PC-3 (cell line): ENCODE measurements at regions of chr10 and their contacts with region 1.

Region 1: DNA sequence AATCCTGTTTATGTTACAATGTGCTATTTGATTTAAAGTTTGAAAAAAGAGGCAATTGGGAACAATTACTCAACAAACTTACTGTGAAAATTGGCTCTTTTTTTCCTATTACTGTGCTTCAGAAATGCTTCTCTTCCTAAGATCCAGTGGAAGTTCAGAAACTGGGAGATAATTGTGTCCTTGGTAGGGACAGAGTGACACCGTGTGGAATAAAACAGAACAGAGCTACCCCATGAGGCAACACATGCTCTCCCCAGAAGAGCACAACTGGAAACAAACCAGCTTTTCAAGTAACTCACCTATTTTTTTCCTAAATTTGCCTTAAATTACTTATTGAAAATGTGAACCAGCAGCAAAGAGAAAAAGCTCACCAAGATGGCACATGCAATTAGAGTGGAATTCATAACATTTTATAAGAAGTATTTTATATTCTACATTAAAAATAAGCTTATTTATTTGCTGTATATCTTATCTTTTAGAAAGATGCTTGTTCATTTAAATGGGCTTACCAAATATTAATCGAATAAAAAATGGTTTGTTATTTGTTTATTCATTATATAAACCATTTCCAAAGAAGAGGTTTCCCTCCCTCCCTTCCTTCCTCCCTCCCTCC is 346.1 kb upstream of the ANKRD30A start:
- DNase-seq: peak; percentile 100
- ATAC-seq: peak; percentile 98
- H3K4me3 ChIP-seq: no peak overlapping the region
- H3K27ac ChIP-seq: peak overlapping the region; percentile 13
- H3K4me1 ChIP-seq: peaks cover 25% of the 10 kb centered on the region
- H3K27me3 ChIP-seq: no peaks in the 10 kb centered on the region
- CTCF ChIP-seq: peak; percentile 100

Region 2: DNA sequence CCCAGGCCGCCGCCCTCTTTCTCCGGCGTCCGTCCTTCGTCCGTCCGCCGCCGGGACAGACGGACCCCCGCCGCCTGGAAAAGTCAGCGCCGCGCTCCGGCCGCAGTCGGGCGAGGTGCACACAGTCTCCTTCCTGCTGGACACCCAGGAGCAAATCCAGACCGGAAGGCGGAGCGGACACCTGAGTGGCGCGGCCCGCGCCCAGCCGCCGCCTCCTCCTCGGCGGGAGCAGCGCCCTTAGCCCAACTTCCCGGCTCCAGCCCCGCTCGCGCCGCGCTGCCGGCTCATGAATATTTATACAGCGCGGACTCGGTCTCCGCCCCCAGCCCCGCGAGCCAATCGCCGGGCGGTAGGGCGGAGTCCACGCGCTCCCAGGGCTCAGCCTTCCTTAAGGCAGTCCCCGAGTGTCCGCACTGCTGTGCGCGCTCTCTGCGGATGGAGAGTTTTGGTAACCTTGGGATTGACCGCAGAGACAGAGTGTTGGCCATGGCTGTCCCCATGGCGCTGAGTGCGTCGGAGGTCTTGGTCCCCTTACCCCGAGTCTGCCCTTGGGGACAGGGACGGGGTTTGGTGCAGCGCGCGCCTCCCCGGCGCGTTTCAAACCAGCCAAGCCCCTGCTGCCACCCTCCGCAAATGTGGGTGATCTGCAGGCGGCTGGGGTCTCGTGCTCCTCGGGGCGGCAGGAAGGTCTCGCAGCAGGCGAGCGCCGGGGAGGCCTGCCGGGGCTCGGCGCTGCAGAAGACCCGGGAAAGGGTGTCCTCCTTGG is 1137.1 kb before region 1 on chr10 and contains the start of gene FZD8:
- CTCF ChIA-PET with region 1: interaction called, 85 read pairs
- POLR2A ChIA-PET with region 1: no interaction called
- intact Hi-C with region 1: loop called (anchors 1 kb)
- DNase-seq: peak; percentile 100
- ATAC-seq: peak; percentile 73
- H3K4me3 ChIP-seq: peak within 1 kb of the TSS; percentile 80
- H3K27ac ChIP-seq: peak within 1 kb of the TSS; percentile 62
- H3K4me1 ChIP-seq: peaks cover 30% of the 10 kb centered on the region
- H3K27me3 ChIP-seq: no peaks in the 10 kb centered on the region
- CTCF ChIP-seq: peak; percentile 60; the same call in 1 of the 2 replicates
- total RNA-seq, gene FZD8: 275 and 375 TPM in 2 replicates

Region 3: DNA sequence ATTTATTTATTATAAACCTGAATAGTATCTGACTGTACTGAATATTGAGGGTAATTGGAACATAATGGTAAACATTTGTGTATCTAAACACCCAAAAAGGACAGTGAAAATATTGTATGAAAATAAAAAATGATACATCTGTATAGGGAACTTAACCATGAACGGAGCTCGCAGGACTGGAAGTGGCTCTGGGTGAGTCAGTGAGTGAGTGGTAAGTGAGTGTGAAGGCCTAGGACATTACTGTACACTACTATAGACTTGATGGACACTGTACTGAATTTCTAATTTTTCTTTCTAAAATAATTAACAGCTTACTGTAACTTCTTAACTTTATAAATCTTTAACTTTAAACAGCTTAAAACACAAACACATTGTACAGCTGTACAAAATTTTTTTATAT is 682.8 kb before region 1 on chr10:
- CTCF ChIA-PET with region 1: interaction called, 5 read pairs
- POLR2A ChIA-PET with region 1: no interaction called
- intact Hi-C with region 1: loop called (anchors 5 kb)
- DNase-seq: peak; percentile 97
- ATAC-seq: peak; percentile 71
- H3K4me3 ChIP-seq: no peak overlapping the region
- H3K27ac ChIP-seq: peak overlapping the region; percentile 58
- H3K4me1 ChIP-seq: peaks cover 29% of the 10 kb centered on the region
- H3K27me3 ChIP-seq: no peaks in the 10 kb centered on the region
- CTCF ChIP-seq: no peak

Region 4: DNA sequence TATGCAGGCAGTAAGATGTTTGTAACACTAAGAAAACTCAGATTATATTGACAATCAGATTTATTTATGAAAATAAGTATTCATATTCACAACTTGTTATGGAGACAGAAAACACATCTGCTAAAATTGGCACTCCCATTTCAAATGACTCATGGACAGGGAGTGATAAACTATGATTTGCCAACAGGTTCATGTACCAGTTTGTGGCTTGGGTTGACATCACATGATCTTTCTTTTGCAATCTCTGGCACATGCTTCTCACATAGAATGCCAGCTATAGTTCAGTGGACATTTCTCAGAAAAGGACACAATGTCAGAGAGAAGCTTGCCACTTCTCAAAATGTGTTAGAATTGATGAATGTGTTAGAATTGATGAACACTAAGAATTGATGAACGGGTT is 317.1 kb before region 1 on chr10:
- CTCF ChIA-PET with region 1: no interaction called
- POLR2A ChIA-PET with region 1: no interaction called
- intact Hi-C with region 1: loop called (anchors 1 kb)
- DNase-seq: peak; percentile 95
- ATAC-seq: no peak
- H3K4me3 ChIP-seq: no peak overlapping the region
- H3K27ac ChIP-seq: no peak overlapping the region
- H3K4me1 ChIP-seq: peaks cover 40% of the 10 kb centered on the region
- H3K27me3 ChIP-seq: no peaks in the 10 kb centered on the region
- CTCF ChIP-seq: no peak

Region 5: DNA sequence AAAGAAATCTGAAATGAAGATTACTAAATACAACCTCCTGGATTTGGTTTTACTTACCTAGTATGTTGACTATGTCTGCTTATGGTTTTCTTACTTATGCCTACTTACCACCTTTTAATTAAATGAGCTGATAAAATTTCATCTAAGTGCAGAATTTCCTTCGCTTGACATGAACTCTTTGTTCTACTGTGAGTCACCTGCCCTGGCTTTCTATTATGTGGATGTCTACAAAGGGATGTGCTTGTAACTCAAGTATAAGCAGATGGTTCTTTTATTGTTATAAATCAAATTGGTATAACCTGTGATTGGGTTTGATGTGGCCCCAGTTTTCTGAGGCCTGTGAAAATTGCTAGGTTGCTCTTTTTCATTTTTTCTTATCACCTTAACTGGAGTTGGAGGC is 43.0 kb before region 1 on chr10:
- CTCF ChIA-PET with region 1: interaction called, 38 read pairs
- POLR2A ChIA-PET with region 1: interaction called, 4 read pairs
- intact Hi-C with region 1: loop called (anchors 1 kb)
- DNase-seq: peak; percentile 75
- ATAC-seq: peak; percentile 15; the same call in 1 of the 2 replicates
- H3K4me3 ChIP-seq: no peak overlapping the region
- H3K27ac ChIP-seq: no peak overlapping the region
- H3K4me1 ChIP-seq: peaks cover 46% of the 10 kb centered on the region
- H3K27me3 ChIP-seq: no peaks in the 10 kb centered on the region
- CTCF ChIP-seq: no peak